Common myeloid progenitor, CD34-positive (primary cell): ENCODE measurements at regions of chr11 and their contacts with region 1.

Region 1: DNA sequence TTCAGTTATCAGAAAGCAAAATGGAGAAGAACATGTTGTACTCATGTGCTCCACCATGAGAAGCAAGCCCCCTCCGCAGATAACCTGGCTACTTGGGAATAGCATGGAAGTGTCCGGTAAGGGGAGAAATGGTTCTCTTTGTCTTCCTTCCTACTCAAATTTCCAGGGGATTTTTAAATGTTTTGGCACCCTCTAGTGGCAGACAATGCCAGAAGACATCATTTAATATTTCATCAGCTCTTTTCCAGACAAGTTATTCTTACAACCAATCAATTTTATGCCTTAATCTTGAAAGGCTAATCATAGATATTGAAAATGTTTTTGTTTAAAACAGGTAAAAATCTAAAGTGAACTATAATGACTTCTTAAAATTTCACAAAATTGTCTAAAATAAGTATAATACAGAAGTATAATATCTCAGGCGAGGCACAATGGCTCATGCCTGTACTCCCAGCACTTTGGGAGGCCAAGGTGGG is 15.7 kb downstream of the CRTAM start:
- DNase-seq: peak; percentile 71 to 78 (median 74)
- H3K4me3 ChIP-seq: no peak overlapping the region
- H3K27ac ChIP-seq: no peak overlapping the region
- H3K4me1 ChIP-seq: peaks cover 7 to 36% (median 21%) of the 10 kb centered on the region in 4 experiments
- H3K27me3 ChIP-seq: no peaks in the 10 kb centered on the region

Region 2: DNA sequence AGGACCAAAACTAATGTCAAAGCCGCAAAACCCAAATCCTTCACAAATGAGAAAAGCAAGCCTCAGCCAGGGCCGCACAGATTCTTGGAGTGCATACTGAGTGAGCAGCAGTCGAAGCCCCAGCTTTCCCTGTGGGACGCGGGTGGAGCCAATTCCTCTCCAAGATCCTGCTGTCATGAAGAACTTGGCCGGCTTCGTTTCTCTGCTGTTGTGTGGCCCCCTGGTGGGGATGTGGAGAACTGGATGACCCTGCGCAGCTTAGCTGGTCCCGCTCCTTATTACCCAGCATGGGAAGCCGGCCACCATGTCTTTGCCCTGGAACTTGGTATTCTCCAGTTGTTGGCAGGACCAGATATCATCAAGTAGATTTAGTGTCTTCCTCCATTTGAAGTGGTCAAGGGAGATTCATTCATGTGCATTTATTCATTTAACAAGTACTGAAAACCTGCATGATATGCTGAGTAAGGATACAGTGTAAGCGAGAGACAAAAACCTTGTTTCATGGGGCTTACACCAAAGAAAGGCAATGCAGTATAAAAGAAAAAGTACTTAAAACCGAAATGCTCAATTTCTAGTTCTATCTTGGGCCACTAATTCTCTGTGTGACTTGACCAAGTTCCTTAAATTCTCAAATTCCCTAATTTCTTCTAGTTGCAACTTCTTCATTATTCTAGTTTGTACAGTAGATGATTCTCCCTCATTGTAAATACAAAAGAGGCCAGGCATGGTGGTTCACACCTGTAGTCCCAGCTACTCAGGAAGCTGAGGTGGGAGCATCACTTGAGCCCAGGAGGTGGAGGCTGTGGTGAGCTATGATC is 72.4 kb before region 1 on chr11:
- CTCF ChIA-PET with region 1: interaction called, 201 read pairs
- POLR2A ChIA-PET with region 1: no interaction called
- DNase-seq: peak; percentile 71 to 78 (median 72)
- H3K4me3 ChIP-seq: no peak overlapping the region
- H3K27ac ChIP-seq: no peak overlapping the region
- H3K4me1 ChIP-seq: peaks cover 0 to 27% (median 20%) of the 10 kb centered on the region in 4 experiments
- H3K27me3 ChIP-seq: no peaks in the 10 kb centered on the region

Region 3: DNA sequence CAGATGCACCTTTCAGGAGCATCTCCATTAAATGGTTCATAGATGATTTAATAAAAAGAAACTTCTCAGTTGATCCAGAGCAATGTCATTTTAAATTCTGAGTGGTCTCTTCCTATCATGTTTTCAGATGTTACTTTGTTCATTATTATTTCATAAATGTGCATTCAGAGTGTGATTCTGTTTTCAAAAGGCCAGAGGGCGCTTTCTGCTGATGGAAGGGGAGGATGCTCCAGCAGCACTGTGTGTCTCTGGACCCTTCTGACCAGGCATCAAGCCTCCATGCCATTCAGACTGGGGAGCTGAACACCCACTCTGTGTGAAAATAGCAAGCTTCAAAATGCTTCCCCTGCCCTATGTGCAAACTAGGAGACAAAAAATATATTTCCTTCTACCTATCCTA is 39.6 kb before region 1 on chr11:
- CTCF ChIA-PET with region 1: interaction called, 178 read pairs
- POLR2A ChIA-PET with region 1: interaction called, 3 read pairs
- DNase-seq: no peak
- H3K4me3 ChIP-seq: no peak overlapping the region
- H3K27ac ChIP-seq: no peak overlapping the region
- H3K4me1 ChIP-seq: peaks cover 7 to 33% (median 19%) of the 10 kb centered on the region in 4 experiments
- H3K27me3 ChIP-seq: no peaks in the 10 kb centered on the region

Region 4: GRCh38 chr11:122843281-122844141 is 10.5 kb before region 1 on chr11:
- CTCF ChIA-PET with region 1: interaction called, 24 read pairs
- POLR2A ChIA-PET with region 1: no interaction called
- DNase-seq: peak in 2 of 3 donors; percentile 63 to 78
- H3K4me3 ChIP-seq: peak overlapping the region in 2 of 7 experiments; percentile 19 to 40
- H3K27ac ChIP-seq: no peak overlapping the region
- H3K4me1 ChIP-seq: peaks cover 11 to 24% (median 19%) of the 10 kb centered on the region in 4 experiments
- H3K27me3 ChIP-seq: no peaks in the 10 kb centered on the region

Region 5: GRCh38 chr11:122897606-122898485 is 43.8 kb after region 1 on chr11:
- CTCF ChIA-PET with region 1: no interaction called
- POLR2A ChIA-PET with region 1: no interaction called
- DNase-seq: no peak
- H3K4me3 ChIP-seq: no peak overlapping the region
- H3K27ac ChIP-seq: no peak overlapping the region
- H3K4me1 ChIP-seq: peaks cover 0 to 13% (median 2%) of the 10 kb centered on the region in 4 experiments
- H3K27me3 ChIP-seq: no peaks in the 10 kb centered on the region

Region 6: GRCh38 chr11:123166071-123166559 is 312.1 kb after region 1 on chr11:
- CTCF ChIA-PET with region 1: no interaction called
- POLR2A ChIA-PET with region 1: no interaction called
- DNase-seq: peak in 2 of 3 donors; percentile 6 to 15
- H3K4me3 ChIP-seq: no peak overlapping the region
- H3K27ac ChIP-seq: no peak overlapping the region
- H3K4me1 ChIP-seq: no peaks in the 10 kb centered on the region
- H3K27me3 ChIP-seq: peaks cover 0 to 4% (median 0%) of the 10 kb centered on the region in 5 experiments